Activated CD4-positive, alpha-beta T cell treated with anti-CD3 and anti-CD28 coated beads, Interleukin-2, amount 10 ng/mL, durations not matched to agents 24 days and 14 days (primary cell): ENCODE measurements at regions of chr14 and their contacts with region 1.

Region 1: GRCh38 chr14:72904840-72905561 is 11.1 kb upstream of the DPF3 start:
- DNase-seq: peak; percentile 89
- H3K4me3 Mint-ChIP-seq: no peak overlapping the region
- H3K27ac Mint-ChIP-seq: no peak overlapping the region
- H3K4me1 Mint-ChIP-seq: peaks cover 17% of the 10 kb centered on the region
- H3K27me3 Mint-ChIP-seq: peaks cover 28% of the 10 kb centered on the region

Region 2: DNA sequence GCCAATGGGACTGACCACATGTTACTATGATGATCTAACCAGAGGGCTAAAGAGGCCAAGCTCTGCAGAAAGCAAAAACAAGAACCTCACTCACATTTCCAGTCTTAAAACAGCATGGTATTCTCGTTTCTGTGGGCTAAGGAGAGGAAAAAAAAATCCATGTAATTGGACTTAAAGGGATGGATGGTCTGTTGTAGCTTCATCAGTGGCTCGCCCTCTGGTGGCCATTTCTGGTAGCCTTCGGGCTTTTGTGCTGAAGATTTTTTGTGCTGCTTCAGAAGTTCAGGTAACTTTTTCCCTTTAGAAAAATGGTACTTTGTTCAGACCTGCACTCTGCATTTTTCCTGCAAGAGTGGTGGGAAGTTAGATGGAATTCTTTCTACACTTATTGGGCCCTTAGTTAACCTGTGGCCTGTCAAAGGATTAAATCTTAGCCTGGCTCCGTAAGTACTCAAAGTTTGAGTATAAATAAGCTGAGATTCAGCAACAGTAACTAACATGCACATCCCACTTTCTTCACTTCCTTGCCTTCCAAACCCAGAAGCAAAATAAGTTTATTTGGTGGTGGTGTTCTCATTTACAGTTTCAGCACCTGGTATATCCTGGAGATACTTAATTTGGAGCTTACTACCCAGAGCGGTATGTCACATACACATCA is 43.6 kb after region 1 on chr14:
- intact Hi-C with region 1: loop called (anchors 2 kb)
- DNase-seq: peak; percentile 90
- H3K4me3 Mint-ChIP-seq: no peak overlapping the region
- H3K27ac Mint-ChIP-seq: no peak overlapping the region
- H3K4me1 Mint-ChIP-seq: peaks cover 6% of the 10 kb centered on the region
- H3K27me3 Mint-ChIP-seq: no peaks in the 10 kb centered on the region